ENCODE measurements at regions of chr1 and their contacts with region 1.

Region 1: GRCh38 chr1:235821361-235821981 is 45.2 kb downstream of the LYST start:
- DNase-seq: no peak
- H3K4me3 ChIP-seq: no peak overlapping the region
- H3K4me3 Mint-ChIP-seq: no peak overlapping the region
- H3K27ac Mint-ChIP-seq: no peak overlapping the region
- H3K4me1 ChIP-seq: no peaks in the 10 kb centered on the region
- H3K4me1 Mint-ChIP-seq: no peaks in the 10 kb centered on the region
- H3K27me3 ChIP-seq: no peaks in the 10 kb centered on the region
- H3K27me3 Mint-ChIP-seq: no peaks in the 10 kb centered on the region
- CTCF ChIP-seq: no peak

Region 2: GRCh38 chr1:235799264-235799663 is 22.2 kb before region 1 on chr1:
- CTCF ChIA-PET with region 1: no interaction called
- POLR2A ChIA-PET with region 1: no interaction called
- intact Hi-C with region 1: no loop called
- DNase-seq: no peak
- H3K4me3 ChIP-seq: no peak overlapping the region
- H3K4me3 Mint-ChIP-seq: no peak overlapping the region
- H3K27ac Mint-ChIP-seq: no peak overlapping the region
- H3K4me1 ChIP-seq: no peaks in the 10 kb centered on the region
- H3K4me1 Mint-ChIP-seq: no peaks in the 10 kb centered on the region
- H3K27me3 ChIP-seq: no peaks in the 10 kb centered on the region
- H3K27me3 Mint-ChIP-seq: no peaks in the 10 kb centered on the region
- CTCF ChIP-seq: no peak

Region 3: GRCh38 chr1:235843461-235843961 is 22.0 kb after region 1 on chr1:
- CTCF ChIA-PET with region 1: interaction called, 3 read pairs
- POLR2A ChIA-PET with region 1: no interaction called
- intact Hi-C with region 1: loop called (anchors 2 kb)
- DNase-seq: peak in 1 of 2 experiments; percentile 35
- H3K4me3 ChIP-seq: no peak overlapping the region
- H3K4me3 Mint-ChIP-seq: no peak overlapping the region
- H3K27ac Mint-ChIP-seq: no peak overlapping the region
- H3K4me1 ChIP-seq: no peaks in the 10 kb centered on the region
- H3K4me1 Mint-ChIP-seq: peaks cover 12% of the 10 kb centered on the region
- H3K27me3 ChIP-seq: no peaks in the 10 kb centered on the region
- H3K27me3 Mint-ChIP-seq: peaks cover 4% of the 10 kb centered on the region
- CTCF ChIP-seq: peak; percentile 55 to 69

Region 4: GRCh38 chr1:235859789-235860188 is 38.3 kb after region 1 on chr1:
- CTCF ChIA-PET with region 1: interaction called, 12 read pairs
- POLR2A ChIA-PET with region 1: no interaction called
- intact Hi-C with region 1: no loop called
- DNase-seq: no peak
- H3K4me3 ChIP-seq: no peak overlapping the region
- H3K4me3 Mint-ChIP-seq: no peak overlapping the region
- H3K27ac Mint-ChIP-seq: no peak overlapping the region
- H3K4me1 ChIP-seq: no peaks in the 10 kb centered on the region
- H3K4me1 Mint-ChIP-seq: peaks cover 2% of the 10 kb centered on the region
- H3K27me3 ChIP-seq: no peaks in the 10 kb centered on the region
- H3K27me3 Mint-ChIP-seq: no peaks in the 10 kb centered on the region
- CTCF ChIP-seq: no peak

Region 5: DNA sequence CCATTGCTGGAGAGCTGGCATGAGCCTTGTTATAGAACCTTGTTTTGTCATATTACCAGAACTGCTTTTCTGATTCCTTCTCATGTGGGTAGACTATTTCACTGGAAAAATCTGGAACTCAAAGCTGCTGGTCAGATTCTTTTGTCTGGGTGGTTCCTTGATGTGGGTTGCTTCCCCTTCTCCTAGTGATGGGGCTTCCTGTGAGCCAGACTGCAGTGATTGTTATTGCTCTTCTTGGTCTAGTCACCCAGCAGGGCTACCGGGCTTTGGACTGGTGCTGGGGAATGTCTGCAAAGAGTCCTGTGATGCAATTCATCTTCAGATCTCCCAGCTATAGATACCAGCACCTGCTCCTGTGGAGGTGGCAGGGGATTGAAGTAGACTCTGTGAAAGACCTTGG is 380.3 kb after region 1 on chr1:
- CTCF ChIA-PET with region 1: no interaction called
- POLR2A ChIA-PET with region 1: no interaction called
- intact Hi-C with region 1: no loop called
- DNase-seq: no peak
- H3K4me3 ChIP-seq: no peak overlapping the region
- H3K4me3 Mint-ChIP-seq: no peak overlapping the region
- H3K27ac Mint-ChIP-seq: no peak overlapping the region
- H3K4me1 ChIP-seq: no peaks in the 10 kb centered on the region
- H3K4me1 Mint-ChIP-seq: peaks cover 7% of the 10 kb centered on the region
- H3K27me3 ChIP-seq: no peaks in the 10 kb centered on the region
- H3K27me3 Mint-ChIP-seq: no peaks in the 10 kb centered on the region
- CTCF ChIP-seq: no peak

Measured in Caco-2 (cell line).